Activated CD4-positive, alpha-beta memory T cell treated with anti-CD3 and anti-CD28 coated beads for 36 hours (primary cell): ENCODE measurements at regions of chr11 and their contacts with region 1.

Region 1: GRCh38 chr11:67167086-67167485 is 48.0 kb downstream of the KDM2A start:
- DNase-seq: no peak
- H3K4me3 Mint-ChIP-seq: no peak overlapping the region
- H3K27ac Mint-ChIP-seq: no peak overlapping the region
- H3K4me1 Mint-ChIP-seq: peaks cover 26% of the 10 kb centered on the region
- H3K27me3 Mint-ChIP-seq: no peaks in the 10 kb centered on the region

Region 2: GRCh38 chr11:67082035-67082791 is 84.9 kb before region 1 on chr11:
- CTCF ChIA-PET with region 1: interaction called, 13 read pairs
- POLR2A ChIA-PET with region 1: no interaction called
- intact Hi-C with region 1: loop called (anchors 1 kb)
- DNase-seq: no peak
- H3K4me3 Mint-ChIP-seq: no peak overlapping the region
- H3K27ac Mint-ChIP-seq: no peak overlapping the region
- H3K4me1 Mint-ChIP-seq: peaks cover 20% of the 10 kb centered on the region
- H3K27me3 Mint-ChIP-seq: peaks cover 6% of the 10 kb centered on the region

Region 3: DNA sequence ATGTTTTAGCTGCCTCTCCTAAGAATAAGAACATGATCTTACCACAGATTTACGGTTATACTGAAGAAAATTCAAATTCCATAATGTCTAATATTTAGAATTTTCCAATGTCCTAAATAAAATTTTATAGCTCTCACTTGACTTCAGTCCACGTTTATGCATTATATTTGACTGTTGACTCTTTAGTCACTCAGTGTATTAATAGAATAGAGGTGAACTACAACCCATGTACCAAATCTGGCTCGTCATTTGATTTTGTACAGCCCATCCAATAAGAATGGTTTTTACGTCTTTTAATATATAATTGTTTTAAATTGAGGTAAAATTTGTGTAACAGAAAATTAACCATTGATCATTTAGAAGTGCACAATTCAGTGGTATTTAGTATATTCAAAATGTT is 13.1 kb before region 1 on chr11:
- CTCF ChIA-PET with region 1: interaction called, 12 read pairs
- POLR2A ChIA-PET with region 1: no interaction called
- intact Hi-C with region 1: no loop called
- DNase-seq: no peak
- H3K4me3 Mint-ChIP-seq: no peak overlapping the region
- H3K27ac Mint-ChIP-seq: no peak overlapping the region
- H3K4me1 Mint-ChIP-seq: peaks cover 9% of the 10 kb centered on the region
- H3K27me3 Mint-ChIP-seq: no peaks in the 10 kb centered on the region

Region 4: GRCh38 chr11:67248653-67249052 is 81.6 kb after region 1 on chr11:
- CTCF ChIA-PET with region 1: no interaction called
- POLR2A ChIA-PET with region 1: no interaction called
- intact Hi-C with region 1: no loop called
- DNase-seq: no peak
- H3K4me3 Mint-ChIP-seq: no peak overlapping the region
- H3K27ac Mint-ChIP-seq: peak overlapping the region; percentile 4
- H3K4me1 Mint-ChIP-seq: peaks cover 57% of the 10 kb centered on the region
- H3K27me3 Mint-ChIP-seq: no peaks in the 10 kb centered on the region